Activated T-helper 1 cell treated with anti-CD3 and anti-CD28 coated beads, Interleukin-12 subunit alpha, Interleukin-12 subunit beta, Interleukin-2, Interleukin-4 antibody, amounts not matched to agents 30 ng/mL and 10 ng/mL and 1 ng/mL, durations not matched to agents 14 hours and 24 hours and 36 hours (primary cell): ENCODE measurements at regions of chr15 and their contacts with region 1.

Region 1: DNA sequence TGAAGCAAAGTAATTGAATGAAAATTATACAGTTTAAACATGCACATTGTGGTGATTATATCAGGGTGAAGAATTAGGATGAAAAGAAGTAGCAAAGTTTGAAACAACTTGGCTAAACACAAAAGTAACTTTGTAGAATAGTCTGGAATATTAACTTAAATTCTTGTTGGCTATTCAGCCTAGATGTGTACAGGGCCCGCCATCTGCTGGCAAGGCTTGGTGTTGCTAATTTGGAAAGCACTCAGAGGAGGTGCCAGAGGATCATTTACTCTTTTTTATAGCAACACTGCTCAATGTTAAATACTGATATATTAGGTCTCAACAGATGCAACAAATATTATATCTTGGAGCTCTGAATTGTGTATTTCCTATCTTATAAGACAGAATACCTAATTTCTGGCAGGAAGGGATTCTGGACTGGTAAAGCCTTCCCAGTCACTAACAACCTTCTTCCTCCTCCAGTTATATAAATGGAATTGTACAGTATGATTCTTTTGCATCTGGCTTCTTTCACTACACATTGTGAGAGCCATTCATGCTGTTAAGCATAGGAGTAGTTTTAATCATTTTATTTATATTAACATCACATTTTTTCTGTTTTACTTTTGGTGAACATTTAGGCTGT is 36.1 kb downstream of the TTC23 start:
- DNase-seq: peak; percentile 43
- H3K4me3 Mint-ChIP-seq: no peak overlapping the region
- H3K27ac Mint-ChIP-seq: no peak overlapping the region
- H3K4me1 Mint-ChIP-seq: no peaks in the 10 kb centered on the region
- H3K27me3 Mint-ChIP-seq: peaks cover 5% of the 10 kb centered on the region

Region 2: DNA sequence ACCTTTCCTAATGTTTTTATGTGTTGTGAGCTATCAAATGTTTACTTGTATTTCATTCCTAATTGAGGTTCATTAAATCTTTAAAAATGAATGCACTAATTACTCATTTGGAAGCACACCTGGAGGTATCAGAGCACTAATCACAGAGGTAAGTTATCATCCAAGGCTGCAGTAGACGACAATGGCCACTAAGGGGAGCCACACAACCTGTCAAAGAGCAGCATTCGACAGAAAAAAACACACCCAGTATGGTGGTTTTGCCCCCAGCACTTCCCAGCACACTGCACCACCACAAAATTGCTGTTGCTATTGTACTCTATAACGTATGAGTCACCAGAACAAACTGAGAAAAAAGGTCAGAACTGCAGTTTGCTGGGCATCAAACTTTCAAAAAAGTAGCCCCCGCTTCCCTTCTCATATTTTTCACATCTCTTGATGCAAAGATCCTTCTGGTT is 770.9 kb before region 1 on chr15:
- intact Hi-C with region 1: loop called (anchors 5 kb)
- DNase-seq: peak; percentile 34
- H3K4me3 Mint-ChIP-seq: no peak overlapping the region
- H3K27ac Mint-ChIP-seq: no peak overlapping the region
- H3K4me1 Mint-ChIP-seq: peaks cover 5% of the 10 kb centered on the region
- H3K27me3 Mint-ChIP-seq: peaks cover 5% of the 10 kb centered on the region

Region 3: GRCh38 chr15:99042892-99043291 is 170.4 kb before region 1 on chr15:
- intact Hi-C with region 1: no loop called
- DNase-seq: no peak
- H3K4me3 Mint-ChIP-seq: no peak overlapping the region
- H3K27ac Mint-ChIP-seq: no peak overlapping the region
- H3K4me1 Mint-ChIP-seq: no peaks in the 10 kb centered on the region
- H3K27me3 Mint-ChIP-seq: peaks cover 22% of the 10 kb centered on the region

Region 4: GRCh38 chr15:99104788-99105513 is 108.3 kb before region 1 on chr15 and contains the start of gene SYNM:
- intact Hi-C with region 1: loop called (anchors 1 kb)
- DNase-seq: peak; percentile 39
- H3K4me3 Mint-ChIP-seq: peak within 1 kb of the TSS; percentile 69
- H3K27ac Mint-ChIP-seq: no peak within 1 kb of the TSS
- H3K4me1 Mint-ChIP-seq: peaks cover 12% of the 10 kb centered on the region
- H3K27me3 Mint-ChIP-seq: peaks cover 36% of the 10 kb centered on the region
- total RNA-seq, gene SYNM: 2.0 and 2.2 TPM in 2 replicates